B cell (primary cell): ENCODE measurements at regions of chr1 and their contacts with region 1.

Region 1: GRCh38 chr1:171313835-171314320 is at the start of gene FMO4:
- DNase-seq: peak; percentile 94
- ATAC-seq: peak; percentile 100
- H3K4me3 ChIP-seq: peak within 1 kb of the TSS; percentile 6 to 58 (median 8)
- H3K4me3 Mint-ChIP-seq: peak within 1 kb of the TSS; percentile 88
- H3K27ac ChIP-seq: peak within 1 kb of the TSS; percentile 51 to 86
- H3K27ac Mint-ChIP-seq: peak within 1 kb of the TSS; percentile 93
- H3K4me1 ChIP-seq: peaks cover 14% of the 10 kb centered on the region in 2 donors
- H3K4me1 Mint-ChIP-seq: peaks cover 19% of the 10 kb centered on the region
- H3K27me3 ChIP-seq: no peaks in the 10 kb centered on the region
- H3K27me3 Mint-ChIP-seq: no peaks in the 10 kb centered on the region
- CTCF ChIP-seq: peak; percentile 89
- total RNA-seq, gene FMO4: 3.0 and 3.5 TPM in 2 replicates

Region 2: GRCh38 chr1:169933984-169934725 is 1379.7 kb before region 1 on chr1:
- CTCF ChIA-PET with region 1: interaction called, 7 read pairs
- POLR2A ChIA-PET with region 1: no interaction called
- intact Hi-C with region 1: loop called (anchors 5 kb)
- DNase-seq: no peak
- ATAC-seq: no peak
- H3K4me3 ChIP-seq: no peak overlapping the region
- H3K4me3 Mint-ChIP-seq: no peak overlapping the region
- H3K27ac ChIP-seq: no peak overlapping the region
- H3K27ac Mint-ChIP-seq: no peak overlapping the region
- H3K4me1 ChIP-seq: no peaks in the 10 kb centered on the region
- H3K4me1 Mint-ChIP-seq: no peaks in the 10 kb centered on the region
- H3K27me3 ChIP-seq: no peaks in the 10 kb centered on the region
- H3K27me3 Mint-ChIP-seq: no peaks in the 10 kb centered on the region
- CTCF ChIP-seq: no peak

Region 3: DNA sequence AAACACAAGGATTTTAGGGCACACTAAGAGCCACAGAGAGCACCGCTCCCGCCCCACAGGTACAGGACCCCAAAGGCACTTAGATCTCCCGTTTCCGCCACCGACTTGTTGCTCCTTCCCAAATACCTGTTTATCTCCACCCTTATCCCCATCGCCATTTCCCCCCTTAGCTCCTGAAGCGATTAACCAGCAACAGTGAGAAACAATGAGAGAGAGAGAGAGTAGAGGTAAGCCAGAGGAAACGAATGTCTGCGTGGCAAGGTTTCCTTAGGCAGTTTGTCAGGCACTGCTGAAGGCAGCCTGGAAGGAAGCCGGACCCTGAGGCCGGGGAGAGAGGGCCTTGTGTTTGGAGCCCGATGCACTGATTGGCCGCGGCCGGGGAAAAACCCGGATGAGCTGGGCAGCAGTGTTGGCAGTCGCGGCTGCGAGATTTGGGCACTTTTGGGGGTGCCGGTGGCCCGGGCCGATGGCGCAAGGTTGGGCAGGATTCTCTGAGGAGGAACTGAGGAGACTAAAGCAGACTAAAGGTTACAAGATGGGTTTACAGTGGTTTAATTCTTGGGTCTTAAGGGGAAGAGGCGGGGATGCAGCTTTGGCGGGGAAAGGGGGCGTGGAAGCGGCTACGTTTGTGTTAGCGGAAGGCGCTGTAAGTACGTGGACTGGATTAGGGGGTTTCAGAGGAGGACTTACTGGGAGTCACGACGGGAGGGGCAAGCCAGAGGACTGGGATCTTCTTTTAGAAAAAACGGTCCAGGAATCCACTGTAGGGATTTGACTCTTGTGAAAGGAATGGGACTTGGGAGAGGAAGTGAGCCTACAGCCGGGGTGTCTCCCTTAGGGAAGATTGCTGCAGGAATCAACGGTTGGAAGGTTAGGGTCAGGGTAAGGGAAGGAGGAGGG is 781.9 kb before region 1 on chr1 and contains the start of gene GORAB:
- CTCF ChIA-PET with region 1: no interaction called
- POLR2A ChIA-PET with region 1: no interaction called
- intact Hi-C with region 1: loop called (anchors 5 kb)
- DNase-seq: peak; percentile 91
- ATAC-seq: peak; percentile 97
- H3K4me3 ChIP-seq: peak within 1 kb of the TSS; percentile 72 to 95 (median 89)
- H3K4me3 Mint-ChIP-seq: no peak within 1 kb of the TSS
- H3K27ac ChIP-seq: peak within 1 kb of the TSS; percentile 82 to 92
- H3K27ac Mint-ChIP-seq: no peak within 1 kb of the TSS
- H3K4me1 ChIP-seq: peaks cover 12 to 17% of the 10 kb centered on the region in 2 donors
- H3K4me1 Mint-ChIP-seq: peaks cover 13% of the 10 kb centered on the region
- H3K27me3 ChIP-seq: no peaks in the 10 kb centered on the region
- H3K27me3 Mint-ChIP-seq: no peaks in the 10 kb centered on the region
- CTCF ChIP-seq: no peak
- total RNA-seq, gene GORAB: 24.2 and 32.5 TPM in 2 replicates

Region 4: GRCh38 chr1:170967042-170967910 is 346.6 kb before region 1 on chr1:
- CTCF ChIA-PET with region 1: interaction called, 44 read pairs
- POLR2A ChIA-PET with region 1: no interaction called
- intact Hi-C with region 1: no loop called
- DNase-seq: peak; percentile 30
- ATAC-seq: no peak
- H3K4me3 ChIP-seq: no peak overlapping the region
- H3K4me3 Mint-ChIP-seq: no peak overlapping the region
- H3K27ac ChIP-seq: no peak overlapping the region
- H3K27ac Mint-ChIP-seq: no peak overlapping the region
- H3K4me1 ChIP-seq: no peaks in the 10 kb centered on the region
- H3K4me1 Mint-ChIP-seq: no peaks in the 10 kb centered on the region
- H3K27me3 ChIP-seq: no peaks in the 10 kb centered on the region
- H3K27me3 Mint-ChIP-seq: peaks cover 13% of the 10 kb centered on the region
- CTCF ChIP-seq: peak; percentile 62

Region 5: DNA sequence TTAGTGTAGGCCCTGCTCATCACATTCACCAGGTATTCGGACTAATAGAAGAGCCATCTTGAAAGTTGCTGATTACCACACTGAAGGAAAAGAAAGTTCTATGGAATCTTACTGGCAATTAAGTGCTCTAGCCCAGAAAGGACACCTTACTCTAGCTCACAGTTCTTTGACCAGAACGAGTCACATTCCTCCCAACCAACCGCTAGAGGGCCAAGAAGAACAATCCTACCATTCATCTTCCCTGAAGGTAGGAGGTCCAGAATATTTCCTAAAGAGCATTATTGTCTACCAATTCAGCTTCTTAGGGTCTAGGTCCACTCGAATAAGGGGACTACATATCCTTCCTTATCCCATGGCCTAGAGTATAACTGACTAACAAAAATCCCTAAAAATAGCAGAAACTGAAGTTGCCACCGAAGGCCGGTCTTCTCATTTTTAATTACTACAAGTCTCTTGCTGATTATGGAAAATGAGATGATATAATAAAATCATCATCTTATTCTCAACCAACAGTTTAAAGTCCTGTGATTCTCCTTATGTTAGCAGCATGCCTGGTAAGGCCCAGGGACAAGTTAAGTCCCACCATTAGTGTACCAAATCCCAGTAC is 68.3 kb before region 1 on chr1:
- CTCF ChIA-PET with region 1: interaction called, 144 read pairs
- POLR2A ChIA-PET with region 1: no interaction called
- intact Hi-C with region 1: loop called (anchors 1 kb)
- DNase-seq: peak; percentile 45
- ATAC-seq: peak; percentile 33
- H3K4me3 ChIP-seq: no peak overlapping the region
- H3K4me3 Mint-ChIP-seq: no peak overlapping the region
- H3K27ac ChIP-seq: no peak overlapping the region
- H3K27ac Mint-ChIP-seq: no peak overlapping the region
- H3K4me1 ChIP-seq: no peaks in the 10 kb centered on the region
- H3K4me1 Mint-ChIP-seq: no peaks in the 10 kb centered on the region
- H3K27me3 ChIP-seq: peaks cover 0 to 7% (median 0%) of the 10 kb centered on the region in 4 experiments
- H3K27me3 Mint-ChIP-seq: peaks cover 19% of the 10 kb centered on the region
- CTCF ChIP-seq: peak; percentile 81